ENCODE measurements at regions of chr1 and their contacts with region 1.

Region 1: DNA sequence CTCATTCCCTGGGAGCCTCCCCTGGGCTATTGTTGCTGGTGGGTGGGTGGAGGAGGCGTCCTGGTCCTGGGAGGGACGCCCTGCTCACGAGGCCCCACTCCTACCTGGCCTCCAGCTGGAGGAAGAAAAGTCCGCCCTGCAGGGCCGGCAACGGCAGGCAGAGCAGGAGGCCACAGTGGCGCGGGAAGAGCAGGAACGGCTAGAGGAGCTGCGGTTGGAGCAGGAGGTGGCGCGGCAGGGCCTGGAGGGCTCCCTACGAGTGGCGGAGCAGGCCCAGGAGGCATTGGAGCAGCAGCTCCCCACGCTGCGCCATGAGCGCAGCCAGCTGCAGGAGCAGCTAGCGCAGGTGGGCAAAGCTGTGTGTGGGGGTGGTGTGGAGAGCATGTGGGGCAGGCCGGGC is 24.9 kb downstream of the CROCC start:
- DNase-seq: no peak
- H3K4me3 ChIP-seq: no peak overlapping the region
- H3K27ac ChIP-seq: no peak overlapping the region
- H3K4me1 ChIP-seq: no peaks in the 10 kb centered on the region
- H3K27me3 ChIP-seq: no peaks in the 10 kb centered on the region
- CTCF ChIP-seq: no peak

Region 2: GRCh38 chr1:16913833-16914662 is 32.6 kb before region 1 on chr1:
- CTCF ChIA-PET with region 1: no interaction called
- POLR2A ChIA-PET with region 1: no interaction called
- intact Hi-C with region 1: loop called (anchors 5 kb)
- DNase-seq: peak; percentile 55 to 85
- H3K4me3 ChIP-seq: peak overlapping the region; percentile 65
- H3K27ac ChIP-seq: no peak overlapping the region
- H3K4me1 ChIP-seq: no peaks in the 10 kb centered on the region
- H3K27me3 ChIP-seq: no peaks in the 10 kb centered on the region
- CTCF ChIP-seq: no peak